Activated CD8-positive, alpha-beta T cell treated with anti-CD3 and anti-CD28 coated beads, Interleukin-2, amount 10 ng/mL, durations not matched to agents 7 days and 5 days (primary cell): ENCODE measurements at regions of chr6 and their contacts with region 1.

Region 1: GRCh38 chr6:25223490-25223991 is 55.6 kb upstream of the CARMIL1 start:
- DNase-seq: peak; percentile 75
- ATAC-seq: peak; percentile 49
- H3K4me3 Mint-ChIP-seq: peak overlapping the region; percentile 52
- H3K27ac Mint-ChIP-seq: no peak overlapping the region
- H3K4me1 Mint-ChIP-seq: peaks cover 13% of the 10 kb centered on the region
- H3K27me3 Mint-ChIP-seq: peaks cover 10% of the 10 kb centered on the region

Region 2: DNA sequence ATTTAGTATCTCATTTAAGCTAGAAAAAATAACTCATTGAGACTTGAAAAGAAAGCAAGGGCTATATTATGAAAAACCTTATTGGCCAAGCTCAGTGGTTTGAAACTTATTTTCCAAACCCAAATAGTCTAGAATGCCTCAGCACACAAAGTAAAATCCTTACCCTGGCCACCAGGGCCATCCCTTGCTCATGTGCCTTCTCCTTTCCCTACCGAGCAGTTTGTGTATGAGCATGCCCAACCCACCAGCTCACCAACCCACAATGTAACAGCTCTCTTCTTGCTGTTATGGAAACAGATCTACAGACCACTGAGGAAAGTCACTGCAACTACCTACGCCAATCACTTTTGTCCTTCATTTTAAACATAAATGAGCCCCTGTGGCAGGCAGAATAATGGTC is 24.0 kb before region 1 on chr6:
- CTCF ChIA-PET with region 1: interaction called, 21 read pairs
- POLR2A ChIA-PET with region 1: no interaction called
- DNase-seq: no peak
- ATAC-seq: no peak
- H3K4me3 Mint-ChIP-seq: no peak overlapping the region
- H3K27ac Mint-ChIP-seq: no peak overlapping the region
- H3K4me1 Mint-ChIP-seq: no peaks in the 10 kb centered on the region
- H3K27me3 Mint-ChIP-seq: peaks cover 9% of the 10 kb centered on the region

Region 3: GRCh38 chr6:25237579-25237978 is 14.0 kb after region 1 on chr6:
- CTCF ChIA-PET with region 1: interaction called, 15 read pairs
- POLR2A ChIA-PET with region 1: no interaction called
- DNase-seq: no peak
- ATAC-seq: no peak
- H3K4me3 Mint-ChIP-seq: no peak overlapping the region
- H3K27ac Mint-ChIP-seq: no peak overlapping the region
- H3K4me1 Mint-ChIP-seq: no peaks in the 10 kb centered on the region
- H3K27me3 Mint-ChIP-seq: no peaks in the 10 kb centered on the region

Region 4: GRCh38 chr6:25312703-25313501 is 89.4 kb after region 1 on chr6:
- CTCF ChIA-PET with region 1: no interaction called
- POLR2A ChIA-PET with region 1: no interaction called
- DNase-seq: no peak
- ATAC-seq: no peak
- H3K4me3 Mint-ChIP-seq: no peak overlapping the region
- H3K27ac Mint-ChIP-seq: no peak overlapping the region
- H3K4me1 Mint-ChIP-seq: peaks cover 12% of the 10 kb centered on the region
- H3K27me3 Mint-ChIP-seq: no peaks in the 10 kb centered on the region

Region 5: GRCh38 chr6:25556516-25556915 is 333.0 kb after region 1 on chr6:
- CTCF ChIA-PET with region 1: interaction called, 67 read pairs
- POLR2A ChIA-PET with region 1: no interaction called
- DNase-seq: peak; percentile 85
- ATAC-seq: peak; percentile 71
- H3K4me3 Mint-ChIP-seq: no peak overlapping the region
- H3K27ac Mint-ChIP-seq: no peak overlapping the region
- H3K4me1 Mint-ChIP-seq: peaks cover 1% of the 10 kb centered on the region
- H3K27me3 Mint-ChIP-seq: no peaks in the 10 kb centered on the region

Region 6: DNA sequence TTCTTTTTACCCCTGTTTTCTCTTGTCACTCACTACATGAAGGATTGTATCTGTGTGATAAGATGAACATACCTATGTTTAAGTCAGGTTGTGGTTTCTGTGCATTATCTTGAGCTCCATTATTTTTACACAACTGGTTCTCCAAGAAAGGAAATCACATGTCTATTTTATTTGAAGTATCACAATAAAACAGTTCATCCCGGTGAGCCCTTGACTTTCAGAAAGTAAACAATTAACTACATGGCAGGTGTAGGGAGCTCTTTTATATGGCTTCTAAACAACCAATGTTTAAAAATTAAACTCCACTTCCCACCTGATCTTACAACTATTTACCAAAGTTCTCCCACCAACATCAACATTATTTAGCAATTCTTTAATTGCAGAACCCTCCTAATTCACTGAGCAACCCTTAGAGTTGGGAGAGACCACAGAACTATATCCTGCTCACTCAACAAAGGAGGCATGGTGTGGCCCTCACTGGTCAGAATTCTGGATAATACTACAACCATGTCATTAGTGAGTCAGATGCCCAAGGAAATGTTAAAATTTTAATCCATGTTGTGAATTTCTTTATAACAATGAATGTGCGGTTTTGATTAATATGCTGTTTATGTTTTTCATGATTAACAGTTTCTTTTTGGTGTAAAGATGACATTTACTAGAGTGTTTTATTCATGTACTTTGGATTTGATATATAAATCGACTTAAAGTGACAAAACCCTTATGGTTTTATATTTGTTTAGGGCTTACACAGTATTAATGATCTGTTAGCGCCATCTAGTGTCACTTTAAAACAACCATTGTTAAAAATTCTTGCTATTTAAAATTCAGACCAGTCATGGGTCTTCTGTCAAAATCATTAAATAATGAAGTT is 378.5 kb after region 1 on chr6:
- CTCF ChIA-PET with region 1: interaction called, 14 read pairs
- POLR2A ChIA-PET with region 1: no interaction called
- DNase-seq: no peak
- ATAC-seq: no peak
- H3K4me3 Mint-ChIP-seq: no peak overlapping the region
- H3K27ac Mint-ChIP-seq: no peak overlapping the region
- H3K4me1 Mint-ChIP-seq: no peaks in the 10 kb centered on the region
- H3K27me3 Mint-ChIP-seq: no peaks in the 10 kb centered on the region

Region 7: GRCh38 chr6:25675167-25675566 is 451.6 kb after region 1 on chr6:
- CTCF ChIA-PET with region 1: no interaction called
- POLR2A ChIA-PET with region 1: no interaction called
- DNase-seq: no peak
- ATAC-seq: no peak
- H3K4me3 Mint-ChIP-seq: no peak overlapping the region
- H3K27ac Mint-ChIP-seq: no peak overlapping the region
- H3K4me1 Mint-ChIP-seq: no peaks in the 10 kb centered on the region
- H3K27me3 Mint-ChIP-seq: peaks cover 14% of the 10 kb centered on the region

Region 8: DNA sequence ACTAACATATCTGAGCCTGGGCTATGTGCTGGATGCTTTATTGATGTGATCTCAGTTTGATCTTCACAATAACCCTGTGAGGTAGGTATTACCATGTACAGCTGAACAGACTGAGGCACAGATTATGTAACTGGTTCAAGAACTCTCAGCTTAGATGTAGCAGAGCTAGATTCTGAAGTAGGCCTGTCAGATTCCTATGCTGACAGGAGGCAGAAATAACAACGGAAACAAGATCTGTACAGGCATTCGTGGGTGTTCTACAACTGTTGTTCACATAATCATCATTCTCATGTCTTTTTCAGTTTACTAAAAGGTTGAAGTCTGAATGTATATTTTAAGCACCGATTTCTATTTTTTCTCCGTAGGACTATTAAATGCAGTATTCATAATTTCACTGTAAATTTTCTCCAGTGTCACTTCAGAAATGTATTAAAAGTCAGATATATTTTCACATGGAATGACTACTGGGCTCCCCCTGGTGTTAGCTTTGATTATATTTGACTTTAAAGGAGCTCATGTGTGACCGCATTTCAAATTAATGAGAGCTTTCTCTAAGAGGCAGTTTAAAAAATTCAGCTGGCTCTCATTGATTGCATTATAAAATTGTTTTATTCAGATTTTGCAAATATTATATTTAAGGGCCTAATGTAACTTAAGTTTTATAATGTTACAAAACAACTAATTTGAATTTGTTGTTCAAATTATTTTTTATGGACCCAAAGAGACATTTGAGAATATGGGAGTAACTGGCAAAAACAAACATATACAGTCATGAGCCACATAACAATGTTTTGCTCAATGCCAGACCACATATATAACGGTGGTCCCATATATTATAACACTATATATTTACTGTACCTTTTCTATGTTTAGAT is 494.6 kb after region 1 on chr6:
- CTCF ChIA-PET with region 1: interaction called, 12 read pairs
- POLR2A ChIA-PET with region 1: no interaction called
- DNase-seq: no peak
- ATAC-seq: no peak
- H3K4me3 Mint-ChIP-seq: no peak overlapping the region
- H3K27ac Mint-ChIP-seq: no peak overlapping the region
- H3K4me1 Mint-ChIP-seq: no peaks in the 10 kb centered on the region
- H3K27me3 Mint-ChIP-seq: peaks cover 19% of the 10 kb centered on the region